Naive thymus-derived CD8-positive, alpha-beta T cell (primary cell): ENCODE measurements at regions of chr22 and their contacts with region 1.

Region 1: GRCh38 chr22:20463324-20464095 is 25.9 kb upstream of the SCARF2 start:
- DNase-seq: peak in 9 of 10 donors; percentile 10 to 76 (median 49)
- ATAC-seq: peak; percentile 66 to 72
- H3K4me3 Mint-ChIP-seq: peak overlapping the region; percentile 37 to 84 (median 74)
- H3K27ac Mint-ChIP-seq: peak overlapping the region; percentile 90 to 99 (median 99)
- H3K4me1 Mint-ChIP-seq: peaks cover 32 to 78% (median 67%) of the 10 kb centered on the region in 4 donors
- H3K27me3 Mint-ChIP-seq: no peaks in the 10 kb centered on the region

Region 2: GRCh38 chr22:20393909-20394691 is 69.4 kb before region 1 on chr22 and contains the start of gene ZNF74:
- POLR2A ChIA-PET with region 1: interaction called, 15 read pairs
- DNase-seq: peak; percentile 74 to 92 (median 82)
- ATAC-seq: peak; percentile 96 to 97
- H3K4me3 Mint-ChIP-seq: peak within 1 kb of the TSS; percentile 82 to 93 (median 91)
- H3K27ac Mint-ChIP-seq: peak within 1 kb of the TSS; percentile 86 to 99 (median 96)
- H3K4me1 Mint-ChIP-seq: peaks cover 21 to 48% (median 43%) of the 10 kb centered on the region in 4 donors
- H3K27me3 Mint-ChIP-seq: no peaks in the 10 kb centered on the region
- polyA plus RNA-seq, gene ZNF74: 6.7 to 10.7 (median 8.2) TPM

Region 3: GRCh38 chr22:20495861-20496681 is 32.6 kb after region 1 on chr22:
- POLR2A ChIA-PET with region 1: interaction called, 65 read pairs
- DNase-seq: peak; percentile 84 to 96 (median 90)
- ATAC-seq: peak; percentile 95 to 96
- H3K4me3 Mint-ChIP-seq: peak overlapping the region; percentile 82 to 97 (median 93)
- H3K27ac Mint-ChIP-seq: peak overlapping the region; percentile 86 to 98 (median 94)
- H3K4me1 Mint-ChIP-seq: peaks cover 30 to 53% (median 47%) of the 10 kb centered on the region in 4 donors
- H3K27me3 Mint-ChIP-seq: no peaks in the 10 kb centered on the region

Region 4: GRCh38 chr22:20550821-20551744 is 87.6 kb after region 1 on chr22:
- POLR2A ChIA-PET with region 1: interaction called, 96 read pairs
- DNase-seq: peak; percentile 46 to 84 (median 63)
- ATAC-seq: peak; percentile 55 to 73
- H3K4me3 Mint-ChIP-seq: peak overlapping the region; percentile 75 to 92 (median 86)
- H3K27ac Mint-ChIP-seq: peak overlapping the region; percentile 96 to 100 (median 99)
- H3K4me1 Mint-ChIP-seq: peaks cover 45 to 94% (median 82%) of the 10 kb centered on the region in 4 donors
- H3K27me3 Mint-ChIP-seq: no peaks in the 10 kb centered on the region